Activated CD8-positive, alpha-beta T cell treated with anti-CD3 and anti-CD28 coated beads, Interleukin-2, amount 10 ng/mL, durations not matched to agents 7 days and 5 days (primary cell): ENCODE measurements at regions of chr10 and their contacts with region 1.

Region 1: DNA sequence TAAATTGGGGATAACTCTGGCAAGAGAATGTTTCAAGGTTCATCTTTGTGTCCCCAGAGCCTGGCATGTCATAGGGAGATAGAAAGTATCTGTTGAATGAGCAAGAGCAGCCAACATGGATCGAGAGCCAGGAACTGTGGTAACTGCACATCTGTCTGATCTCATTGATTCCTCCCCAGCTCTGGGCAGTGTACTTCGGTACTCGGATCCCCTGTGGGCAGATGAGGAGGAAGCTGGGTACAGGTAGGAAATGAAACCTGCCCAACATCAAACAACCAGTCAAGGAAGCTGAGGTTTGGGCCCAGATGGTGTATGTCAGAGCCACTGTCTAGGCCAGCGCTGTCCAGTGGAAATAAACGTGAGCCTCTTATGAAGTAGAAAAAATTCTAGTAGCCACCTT is 76.4 kb downstream of the GRK5 start:
- DNase-seq: peak; percentile 54
- ATAC-seq: peak; percentile 76
- H3K4me3 Mint-ChIP-seq: peak overlapping the region; percentile 32
- H3K27ac Mint-ChIP-seq: peak overlapping the region; percentile 72
- H3K4me1 Mint-ChIP-seq: peaks cover 60% of the 10 kb centered on the region
- H3K27me3 Mint-ChIP-seq: no peaks in the 10 kb centered on the region

Region 2: DNA sequence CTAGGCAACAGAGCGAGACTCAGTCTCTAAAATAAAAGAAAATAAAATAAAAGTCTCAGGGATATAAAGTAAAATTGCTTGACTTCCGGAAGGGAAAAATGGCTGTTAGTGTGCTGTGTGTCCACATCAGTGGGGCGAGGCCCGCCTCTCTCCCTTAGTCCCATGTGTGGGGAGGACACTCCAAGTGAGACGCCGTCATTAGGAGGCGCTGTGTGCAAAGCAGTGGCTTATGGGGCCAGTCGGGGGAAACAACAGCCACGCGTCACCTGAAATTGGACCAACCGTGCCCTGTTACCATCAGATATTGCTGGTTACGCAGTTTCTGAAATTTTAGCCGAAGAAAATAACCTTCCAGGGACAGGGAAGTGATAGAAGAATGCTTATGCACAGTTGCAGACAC is 134.1 kb before region 1 on chr10:
- CTCF ChIA-PET with region 1: no interaction called
- POLR2A ChIA-PET with region 1: no interaction called
- DNase-seq: no peak
- ATAC-seq: no peak
- H3K4me3 Mint-ChIP-seq: no peak overlapping the region
- H3K27ac Mint-ChIP-seq: no peak overlapping the region
- H3K4me1 Mint-ChIP-seq: no peaks in the 10 kb centered on the region
- H3K27me3 Mint-ChIP-seq: no peaks in the 10 kb centered on the region

Region 3: DNA sequence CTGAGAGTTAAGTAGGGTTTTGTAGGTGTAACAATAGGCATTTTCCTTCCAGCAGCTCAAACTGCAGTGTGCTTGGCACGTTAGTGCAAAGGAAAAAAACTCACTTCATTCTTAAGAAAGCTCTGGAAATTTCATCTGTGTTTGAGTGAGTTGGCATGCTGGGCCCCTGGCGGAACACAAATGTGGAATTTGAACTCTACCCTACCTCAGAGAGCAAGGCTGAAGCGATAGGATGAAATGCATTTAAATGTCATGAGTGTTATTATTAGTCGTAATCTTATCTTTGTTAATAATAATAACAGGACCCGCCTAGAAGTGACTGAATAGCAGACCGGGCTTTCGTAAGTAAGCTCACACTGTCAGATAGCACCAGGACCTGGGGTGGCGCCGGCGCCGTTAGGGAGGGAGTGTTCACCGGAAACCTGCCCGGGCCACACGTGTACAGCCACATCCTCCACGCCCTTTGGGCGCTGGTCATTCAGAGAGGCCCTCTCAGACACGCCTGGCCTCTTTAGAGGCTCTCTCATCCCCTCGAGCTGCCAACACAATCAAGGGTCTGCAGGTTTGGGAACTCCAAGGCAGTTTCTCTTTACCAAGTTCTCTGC is 13.0 kb before region 1 on chr10:
- CTCF ChIA-PET with region 1: interaction called, 19 read pairs
- POLR2A ChIA-PET with region 1: interaction called, 6 read pairs
- DNase-seq: peak; percentile 68
- ATAC-seq: peak; percentile 39
- H3K4me3 Mint-ChIP-seq: peak overlapping the region; percentile 22
- H3K27ac Mint-ChIP-seq: peak overlapping the region; percentile 78
- H3K4me1 Mint-ChIP-seq: peaks cover 67% of the 10 kb centered on the region
- H3K27me3 Mint-ChIP-seq: no peaks in the 10 kb centered on the region